GM12878 (cell line): ENCODE measurements at regions of chr7 and their contacts with region 1.

Region 1: DNA sequence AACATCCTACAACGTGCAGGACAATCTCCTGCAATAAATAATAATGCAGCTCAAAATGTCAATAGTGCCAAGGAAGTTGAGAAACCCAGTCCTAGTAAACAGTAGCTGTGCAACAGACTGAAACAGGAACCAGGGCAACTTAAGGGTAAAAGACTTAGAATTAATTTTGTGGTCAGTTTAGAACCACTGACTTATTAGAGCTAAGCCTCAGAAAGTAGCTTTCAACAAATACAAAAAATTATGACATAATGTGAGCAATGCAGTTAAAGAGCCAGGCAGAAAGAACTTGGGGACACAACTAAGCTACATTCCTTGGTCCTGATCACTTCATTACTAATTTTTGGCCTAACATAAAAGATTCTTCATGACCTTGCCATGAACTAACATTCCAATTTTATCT is 195.4 kb downstream of the MACC1 start:
- DNase-seq: peak; percentile 48
- ATAC-seq: peak; percentile 91
- H3K4me3 ChIP-seq: no peak overlapping the region
- H3K27ac ChIP-seq: no peak overlapping the region
- H3K4me1 ChIP-seq: peaks cover 18% of the 10 kb centered on the region
- H3K27me3 ChIP-seq: no peaks in the 10 kb centered on the region
- CTCF ChIP-seq: no peak
- EP300 ChIP-seq: no peak; a peak in 1 of 4 replicates
- POLR2A ChIP-seq: no peak
- RAD21 ChIP-seq: no peak

Region 2: GRCh38 chr7:20010877-20011276 is 11.0 kb before region 1 on chr7:
- CTCF ChIA-PET with region 1: interaction called, 5 read pairs
- POLR2A ChIA-PET with region 1: no interaction called
- RAD21 ChIA-PET with region 1: interaction called, 6 read pairs
- SMC1A ChIA-PET with region 1: interaction called, 17 read pairs
- in situ Hi-C with region 1: no loop called
- intact Hi-C with region 1: no loop called
- DNase-seq: peak; percentile 35
- ATAC-seq: no peak
- H3K4me3 ChIP-seq: no peak overlapping the region
- H3K27ac ChIP-seq: no peak overlapping the region
- H3K4me1 ChIP-seq: peaks cover 3% of the 10 kb centered on the region; the same call in 1 of the 2 replicates
- H3K27me3 ChIP-seq: no peaks in the 10 kb centered on the region
- CTCF ChIP-seq: no peak
- EP300 ChIP-seq: no peak
- POLR2A ChIP-seq: no peak
- RAD21 ChIP-seq: no peak